ENCODE measurements at regions of chr3 and their contacts with region 1.

Region 1: DNA sequence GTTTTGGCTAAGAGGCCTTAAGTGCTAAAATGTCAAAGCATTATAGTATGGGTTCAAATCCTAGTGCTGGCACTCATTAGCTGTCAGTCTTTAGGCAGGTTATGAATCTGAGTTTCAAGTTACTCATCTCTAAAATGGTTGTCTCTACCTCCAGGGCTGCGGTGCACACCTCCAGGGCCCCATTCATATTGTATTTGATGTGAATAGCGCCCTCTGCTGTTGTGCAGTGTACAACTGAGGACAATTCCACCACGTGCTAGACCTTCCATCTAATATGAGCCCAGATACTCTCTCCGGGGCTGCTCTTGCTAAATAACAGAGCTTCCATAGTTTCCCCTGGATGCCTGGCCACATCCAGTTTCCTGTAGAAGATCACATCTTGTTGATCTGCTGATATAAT is 54.3 kb downstream of the OXNAD1 start:
- DNase-seq: peak; percentile 56 to 89 (median 82)
- ATAC-seq: peak; percentile 77
- H3K4me3 ChIP-seq: no peak overlapping the region
- H3K4me3 Mint-ChIP-seq: no peak overlapping the region
- H3K27ac ChIP-seq: peak overlapping the region in 1 of 2 experiments; percentile 62
- H3K27ac Mint-ChIP-seq: peak overlapping the region; percentile 95
- H3K4me1 ChIP-seq: peaks cover 65% of the 10 kb centered on the region
- H3K4me1 Mint-ChIP-seq: peaks cover 85% of the 10 kb centered on the region
- H3K27me3 ChIP-seq: no peaks in the 10 kb centered on the region
- H3K27me3 Mint-ChIP-seq: no peaks in the 10 kb centered on the region
- CTCF ChIP-seq: peak; percentile 66

Region 2: DNA sequence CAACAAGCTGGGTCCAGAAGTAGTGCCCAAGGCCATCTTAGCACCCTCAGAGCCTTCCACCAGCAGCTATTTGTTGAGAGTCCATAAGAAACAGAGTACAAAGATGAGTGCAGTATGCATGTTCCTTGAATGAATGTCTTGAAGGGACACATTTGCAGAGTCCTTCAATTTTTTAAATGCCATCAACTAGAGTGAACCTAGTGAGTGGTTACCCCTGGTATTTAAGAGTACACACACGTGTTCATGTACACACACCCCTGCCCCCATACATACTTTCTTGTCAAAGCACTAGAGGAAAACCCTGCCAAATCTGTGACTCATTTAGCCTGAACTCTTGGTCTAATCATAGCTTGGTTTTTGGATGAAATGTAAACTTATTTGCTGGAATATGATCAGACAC is 229.3 kb before region 1 on chr3:
- CTCF ChIA-PET with region 1: no interaction called
- POLR2A ChIA-PET with region 1: no interaction called
- intact Hi-C with region 1: no loop called
- DNase-seq: no peak
- ATAC-seq: no peak
- H3K4me3 ChIP-seq: no peak overlapping the region
- H3K4me3 Mint-ChIP-seq: no peak overlapping the region
- H3K27ac ChIP-seq: no peak overlapping the region
- H3K27ac Mint-ChIP-seq: no peak overlapping the region
- H3K4me1 ChIP-seq: no peaks in the 10 kb centered on the region
- H3K4me1 Mint-ChIP-seq: no peaks in the 10 kb centered on the region
- H3K27me3 ChIP-seq: peaks cover 0 to 2% of the 10 kb centered on the region in 2 experiments
- H3K27me3 Mint-ChIP-seq: peaks cover 3% of the 10 kb centered on the region
- CTCF ChIP-seq: no peak

Region 3: GRCh38 chr3:16280671-16281070 is 38.6 kb before region 1 on chr3:
- CTCF ChIA-PET with region 1: interaction called, 35 read pairs
- POLR2A ChIA-PET with region 1: interaction called, 32 read pairs
- intact Hi-C with region 1: no loop called
- DNase-seq: no peak
- ATAC-seq: no peak
- H3K4me3 ChIP-seq: no peak overlapping the region
- H3K4me3 Mint-ChIP-seq: no peak overlapping the region
- H3K27ac ChIP-seq: no peak overlapping the region
- H3K27ac Mint-ChIP-seq: no peak overlapping the region
- H3K4me1 ChIP-seq: peaks cover 14% of the 10 kb centered on the region
- H3K4me1 Mint-ChIP-seq: peaks cover 27% of the 10 kb centered on the region
- H3K27me3 ChIP-seq: no peaks in the 10 kb centered on the region
- H3K27me3 Mint-ChIP-seq: no peaks in the 10 kb centered on the region
- CTCF ChIP-seq: no peak

Region 4: DNA sequence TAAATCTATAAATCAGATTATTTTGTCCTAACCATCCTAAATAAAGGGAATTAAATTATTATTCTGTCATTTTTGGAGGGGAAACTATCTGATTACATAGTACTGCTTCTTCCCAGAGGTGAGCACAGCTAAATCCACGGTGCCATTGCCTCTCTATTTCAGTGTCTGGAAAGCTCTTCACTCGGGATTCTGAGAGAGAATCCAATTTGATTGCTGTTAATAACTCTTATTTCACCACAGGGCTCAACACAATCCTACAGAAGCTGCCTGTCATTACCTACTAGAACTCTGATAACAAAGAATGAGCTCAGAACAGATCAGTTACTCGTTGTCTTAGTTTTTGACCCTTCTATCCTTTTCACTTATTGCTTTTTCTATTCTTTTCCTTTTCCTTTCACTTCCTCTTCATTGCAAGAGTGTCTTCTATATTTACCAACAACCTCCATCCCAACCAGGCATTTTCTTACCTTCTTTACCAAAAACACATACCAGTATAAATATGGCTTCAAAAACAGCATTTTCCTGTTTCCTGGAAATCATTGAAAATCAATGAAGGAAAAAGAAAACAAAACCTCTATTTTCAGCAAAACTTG is 23.9 kb before region 1 on chr3:
- CTCF ChIA-PET with region 1: interaction called, 388 read pairs
- POLR2A ChIA-PET with region 1: interaction called, 128 read pairs
- intact Hi-C with region 1: loop called (anchors 1 kb)
- DNase-seq: no peak
- ATAC-seq: no peak
- H3K4me3 ChIP-seq: peak overlapping the region; percentile 1 to 5
- H3K4me3 Mint-ChIP-seq: peak overlapping the region; percentile 72
- H3K27ac ChIP-seq: peak overlapping the region in 1 of 2 experiments; percentile 42
- H3K27ac Mint-ChIP-seq: peak overlapping the region; percentile 90
- H3K4me1 ChIP-seq: peaks cover 76% of the 10 kb centered on the region
- H3K4me1 Mint-ChIP-seq: peaks cover 88% of the 10 kb centered on the region
- H3K27me3 ChIP-seq: no peaks in the 10 kb centered on the region
- H3K27me3 Mint-ChIP-seq: no peaks in the 10 kb centered on the region
- CTCF ChIP-seq: no peak

Region 5: GRCh38 chr3:16332904-16333426 is 13.7 kb after region 1 on chr3:
- CTCF ChIA-PET with region 1: interaction called, 14 read pairs
- POLR2A ChIA-PET with region 1: interaction called, 5 read pairs
- intact Hi-C with region 1: no loop called
- DNase-seq: no peak
- ATAC-seq: no peak
- H3K4me3 ChIP-seq: no peak overlapping the region
- H3K4me3 Mint-ChIP-seq: no peak overlapping the region
- H3K27ac ChIP-seq: no peak overlapping the region
- H3K27ac Mint-ChIP-seq: peak overlapping the region; percentile 60
- H3K4me1 ChIP-seq: peaks cover 17% of the 10 kb centered on the region
- H3K4me1 Mint-ChIP-seq: peaks cover 52% of the 10 kb centered on the region
- H3K27me3 ChIP-seq: no peaks in the 10 kb centered on the region
- H3K27me3 Mint-ChIP-seq: no peaks in the 10 kb centered on the region
- CTCF ChIP-seq: no peak

Region 6: GRCh38 chr3:16550676-16551341 is 231.5 kb after region 1 on chr3:
- CTCF ChIA-PET with region 1: interaction called, 29 read pairs
- POLR2A ChIA-PET with region 1: no interaction called
- intact Hi-C with region 1: loop called (anchors 1 kb)
- DNase-seq: peak; percentile 51 to 89 (median 73)
- ATAC-seq: peak; percentile 100
- H3K4me3 ChIP-seq: no peak overlapping the region
- H3K4me3 Mint-ChIP-seq: no peak overlapping the region
- H3K27ac ChIP-seq: no peak overlapping the region
- H3K27ac Mint-ChIP-seq: peak overlapping the region; percentile 60
- H3K4me1 ChIP-seq: no peaks in the 10 kb centered on the region
- H3K4me1 Mint-ChIP-seq: peaks cover 3% of the 10 kb centered on the region
- H3K27me3 ChIP-seq: no peaks in the 10 kb centered on the region
- H3K27me3 Mint-ChIP-seq: no peaks in the 10 kb centered on the region
- CTCF ChIP-seq: peak; percentile 87

Measured in CD8-positive, alpha-beta T cell (primary cell).